ENCODE measurements at regions of chr1 and their contacts with region 1.

Region 1: GRCh38 chr1:61120998-61121397 is 38.6 kb downstream of the NFIA start:
- DNase-seq: no peak

Region 2: GRCh38 chr1:61084491-61085031 is 36.4 kb before region 1 on chr1:
- intact Hi-C with region 1: loop called (anchors 5 kb)
- DNase-seq: no peak

Measured in posterior cingulate gyrus (tissue), 11 donors.